Heart right ventricle (tissue), 16 donors: ENCODE measurements at regions of chr2 and their contacts with region 1.

Region 1: GRCh38 chr2:226733189-226733858 is 66.3 kb downstream of the IRS1 start:
- DNase-seq: no peak
- ATAC-seq: peak in 6 of 8 donors; percentile 32 to 71 (median 59)
- H3K4me3 ChIP-seq: no peak overlapping the region
- H3K27ac ChIP-seq: peak overlapping the region in 6 of 10 donors; percentile 6 to 55 (median 22)
- H3K4me1 ChIP-seq: peaks cover 4 to 35% (median 23%) of the 10 kb centered on the region in 9 donors
- H3K27me3 ChIP-seq: no peaks in the 10 kb centered on the region
- CTCF ChIP-seq: no peak

Region 2: DNA sequence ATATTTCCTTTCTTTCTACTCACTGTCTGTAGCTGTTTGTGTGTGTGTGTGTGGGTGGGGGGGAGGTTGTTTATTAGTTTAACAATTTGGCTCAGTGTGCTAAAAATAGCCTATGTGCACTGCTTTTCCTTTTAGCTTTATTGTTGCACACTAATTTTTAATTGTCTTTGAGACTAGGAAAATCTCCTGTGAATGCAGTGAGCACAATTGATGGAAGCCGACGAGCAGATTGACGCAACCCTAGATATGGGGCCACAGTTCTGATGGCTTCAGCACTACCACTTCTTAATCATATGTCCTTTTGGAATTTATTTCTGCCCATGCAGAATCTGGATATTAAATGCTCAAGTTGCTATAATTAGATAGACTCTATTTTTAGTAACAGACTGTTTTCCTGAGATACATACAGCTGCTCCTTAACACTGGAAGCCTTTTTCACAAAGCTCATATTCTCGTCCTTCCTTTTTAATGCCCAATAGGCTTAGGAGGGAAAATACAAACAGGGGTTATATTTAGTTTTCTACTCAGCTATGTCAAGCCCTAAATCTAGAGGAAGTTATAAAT is 42.8 kb before region 1 on chr2:
- intact Hi-C with region 1: loop called in 1 of 10 experiments (anchors 5 kb)
- DNase-seq: peak in 1 of 2 donors; percentile 39
- ATAC-seq: peak; percentile 68 to 87 (median 80)
- H3K4me3 ChIP-seq: peak overlapping the region in 5 of 10 donors; percentile 6 to 32 (median 25)
- H3K27ac ChIP-seq: peak overlapping the region in 9 of 10 donors; percentile 19 to 82 (median 62)
- H3K4me1 ChIP-seq: peaks cover 12 to 56% (median 35%) of the 10 kb centered on the region in 9 donors
- H3K27me3 ChIP-seq: no peaks in the 10 kb centered on the region
- CTCF ChIP-seq: no peak

Region 3: DNA sequence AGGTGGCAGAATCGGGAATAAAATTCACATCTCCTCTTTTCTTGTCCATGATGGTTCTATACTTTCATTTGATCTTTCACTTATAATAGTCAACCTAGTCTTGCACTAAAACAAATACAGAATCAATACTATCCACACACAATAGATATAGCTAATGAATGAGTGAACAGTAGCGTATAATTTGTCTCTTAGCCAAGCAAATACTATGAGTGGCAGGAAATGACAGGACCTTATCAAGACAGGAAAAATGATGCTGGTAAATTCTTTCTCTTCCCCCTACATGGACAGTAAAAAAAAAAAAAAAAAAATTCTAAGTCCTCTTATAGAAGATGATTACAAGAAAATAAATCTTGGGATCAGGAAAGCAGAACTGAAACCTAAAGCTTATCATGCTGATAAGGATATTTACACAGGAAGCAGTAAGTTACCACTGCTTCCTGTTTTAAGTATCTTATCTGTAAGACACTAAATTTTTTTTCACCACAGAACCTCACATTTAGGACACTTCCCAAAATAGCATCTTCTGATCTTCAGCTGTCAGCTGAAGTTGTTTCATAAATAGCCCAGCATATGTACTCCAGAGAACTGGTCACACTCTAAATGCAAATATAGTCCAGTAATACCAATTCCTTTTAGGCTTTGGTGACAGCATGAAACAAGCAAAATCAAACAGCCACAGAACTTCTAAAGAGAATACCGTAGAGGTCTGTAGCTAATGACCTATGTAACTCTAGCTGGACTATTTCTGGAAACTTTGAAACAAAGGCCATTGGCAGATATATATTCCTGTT is 39.3 kb after region 1 on chr2:
- intact Hi-C with region 1: loop called in 1 of 10 experiments (anchors 1 kb)
- DNase-seq: no peak
- ATAC-seq: peak in 6 of 8 donors; percentile 39 to 71 (median 57)
- H3K4me3 ChIP-seq: peak overlapping the region in 1 of 10 donors; percentile 4
- H3K27ac ChIP-seq: peak overlapping the region; percentile 38 to 87 (median 71)
- H3K4me1 ChIP-seq: peaks cover 0 to 66% (median 33%) of the 10 kb centered on the region in 9 donors
- H3K27me3 ChIP-seq: no peaks in the 10 kb centered on the region
- CTCF ChIP-seq: no peak

Region 4: GRCh38 chr2:226782092-226782713 is 48.9 kb after region 1 on chr2:
- intact Hi-C with region 1: loop called in 1 of 10 experiments (anchors 10 kb)
- DNase-seq: no peak
- ATAC-seq: peak in 4 of 8 donors; percentile 19 to 56 (median 42)
- H3K4me3 ChIP-seq: no peak overlapping the region
- H3K27ac ChIP-seq: peak overlapping the region in 7 of 10 donors; percentile 4 to 52 (median 36)
- H3K4me1 ChIP-seq: peaks cover 0 to 51% (median 21%) of the 10 kb centered on the region in 9 donors
- H3K27me3 ChIP-seq: no peaks in the 10 kb centered on the region
- CTCF ChIP-seq: no peak

Region 5: DNA sequence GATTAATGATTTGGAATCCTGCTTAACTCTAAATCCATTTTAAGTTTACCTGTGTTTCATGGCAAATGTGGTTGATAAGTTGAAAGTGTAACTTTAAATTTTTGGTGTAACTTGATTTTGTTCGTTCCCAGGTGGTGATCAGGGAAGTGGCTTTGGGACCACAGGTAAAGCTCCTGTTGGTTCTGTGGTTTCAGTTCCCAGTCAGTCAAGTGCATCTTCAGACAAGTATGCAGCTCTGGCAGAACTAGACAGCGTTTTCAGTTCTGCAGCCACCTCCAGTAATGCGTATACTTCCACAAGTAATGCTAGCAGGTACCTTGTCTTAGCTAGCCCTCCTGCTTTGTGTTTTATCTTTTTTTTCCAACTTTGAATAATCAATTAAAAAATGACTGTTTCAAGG is 801.4 kb after region 1 on chr2:
- intact Hi-C with region 1: no loop called
- DNase-seq: no peak
- ATAC-seq: no peak
- H3K4me3 ChIP-seq: no peak overlapping the region
- H3K27ac ChIP-seq: no peak overlapping the region
- H3K4me1 ChIP-seq: no peaks in the 10 kb centered on the region
- H3K27me3 ChIP-seq: no peaks in the 10 kb centered on the region
- CTCF ChIP-seq: no peak